Activated CD4-positive, alpha-beta T cell treated with anti-CD3 and anti-CD28 coated beads, Interleukin-2, amount 10 ng/mL, durations not matched to agents 7 days and 5 days (primary cell): ENCODE measurements at regions of chr17 and their contacts with region 1.

Region 1: DNA sequence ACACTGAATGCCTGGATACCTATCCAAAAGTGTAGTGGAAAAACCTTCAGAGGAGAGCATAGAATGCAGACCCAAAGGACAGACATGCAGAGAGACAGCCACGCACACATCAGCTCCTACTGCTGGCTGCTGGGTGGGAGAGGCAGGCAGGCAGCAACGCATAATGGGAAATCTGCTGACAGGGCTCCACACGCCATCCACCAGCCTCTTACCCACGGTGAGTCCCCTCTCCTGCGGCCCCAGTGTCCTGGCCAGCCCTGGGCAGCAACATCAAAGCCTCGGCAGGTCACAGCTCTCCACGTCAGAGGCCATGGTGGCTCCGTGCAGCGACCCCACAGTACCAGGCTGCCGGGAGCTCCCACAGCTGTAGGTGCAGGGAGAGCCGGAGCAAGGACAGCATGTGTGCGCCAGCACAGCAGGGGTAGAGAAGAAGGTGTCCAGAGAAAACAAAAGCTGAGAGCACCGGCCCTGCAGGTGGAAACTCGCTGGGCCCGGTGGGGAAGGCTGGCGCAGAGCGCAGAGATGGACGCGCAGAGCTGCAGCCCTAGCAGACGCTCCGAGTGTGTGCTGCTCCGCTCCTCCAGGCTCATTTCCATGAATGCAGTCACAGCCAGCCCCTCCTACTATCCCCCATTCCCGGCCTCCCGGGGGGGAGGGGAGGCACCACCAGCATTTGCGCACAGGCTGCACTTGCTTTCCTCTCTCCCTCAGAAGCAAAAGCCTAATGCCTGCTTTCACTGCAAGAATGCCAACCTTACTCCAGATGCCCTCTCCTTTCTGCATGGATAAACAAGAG is 58.9 kb downstream of the CYTH1 start:
- DNase-seq: no peak
- H3K4me3 Mint-ChIP-seq: no peak overlapping the region
- H3K27ac Mint-ChIP-seq: peak overlapping the region; percentile 73
- H3K4me1 Mint-ChIP-seq: peaks cover 93% of the 10 kb centered on the region
- H3K27me3 Mint-ChIP-seq: no peaks in the 10 kb centered on the region

Region 2: DNA sequence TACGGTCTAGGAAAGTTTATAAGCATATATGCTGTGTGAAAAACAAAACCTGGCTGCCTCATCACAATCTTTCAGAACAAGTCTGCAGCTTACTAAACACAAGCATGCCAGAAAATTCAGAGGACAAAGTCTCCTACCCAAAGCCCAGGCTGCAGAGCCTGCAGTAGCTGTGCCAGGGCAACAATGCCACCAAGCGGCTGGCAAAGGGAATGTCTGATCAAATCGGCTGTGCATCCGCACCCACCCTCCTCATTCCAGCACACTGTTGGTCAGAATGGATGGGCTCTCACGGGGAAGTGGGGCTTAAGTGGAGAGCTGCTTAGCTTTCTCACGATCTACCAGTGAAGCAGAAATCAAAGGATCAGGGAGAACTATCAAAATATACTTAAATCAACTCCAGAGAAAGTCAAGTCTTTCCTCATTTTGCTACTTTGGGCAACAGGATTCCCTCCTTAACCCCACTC is 14.7 kb before region 1 on chr17:
- CTCF ChIA-PET with region 1: interaction called, 19 read pairs
- POLR2A ChIA-PET with region 1: no interaction called
- DNase-seq: peak; percentile 67
- H3K4me3 Mint-ChIP-seq: peak overlapping the region; percentile 34
- H3K27ac Mint-ChIP-seq: peak overlapping the region; percentile 66
- H3K4me1 Mint-ChIP-seq: peaks cover 61% of the 10 kb centered on the region
- H3K27me3 Mint-ChIP-seq: no peaks in the 10 kb centered on the region